K562 (cell line): ENCODE measurements at regions of chr11 and their contacts with region 1.

Region 1: DNA sequence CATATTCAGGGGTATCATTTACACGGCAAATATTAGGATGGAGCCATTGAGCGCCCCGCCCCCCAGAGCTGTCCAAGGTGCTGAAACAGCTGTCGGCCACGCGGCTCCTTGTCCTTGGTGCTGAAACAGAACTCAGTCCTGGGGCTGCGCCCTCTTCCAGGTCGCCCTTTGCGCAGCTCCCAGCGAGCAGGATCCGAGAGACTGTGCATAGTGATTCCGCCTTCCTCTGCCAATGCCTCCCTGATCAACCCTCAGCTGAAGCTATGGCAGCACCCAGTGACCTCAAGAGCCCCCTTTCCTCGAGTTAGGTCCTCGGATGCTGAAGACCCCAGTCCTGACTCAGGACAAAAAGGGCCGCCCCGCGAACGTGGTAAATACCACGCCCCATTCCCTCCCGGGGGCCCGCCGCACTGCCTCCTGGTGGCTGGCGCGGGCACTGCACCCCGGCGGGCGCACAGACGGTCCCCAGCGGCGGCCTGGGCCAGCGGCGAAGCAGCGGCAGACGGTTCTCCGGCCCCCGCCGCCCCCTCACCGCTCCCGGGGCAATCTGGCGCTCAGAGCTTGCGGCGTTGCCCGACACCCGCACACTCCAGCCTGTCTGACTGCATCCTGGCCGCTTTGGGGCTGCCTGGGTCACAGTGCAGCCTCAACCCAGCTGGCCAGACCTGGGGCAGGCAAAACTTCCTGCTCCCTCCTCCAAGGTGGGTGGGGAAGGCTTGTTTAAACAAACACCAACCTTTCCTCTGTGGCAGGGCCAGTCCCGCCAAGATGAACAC is 13.4 kb downstream of the SYT7 start:
- DNase-seq: peak; percentile 90 to 95 (median 94)
- ATAC-seq: peak; percentile 98
- H3K4me3 ChIP-seq: no peak overlapping the region
- H3K27ac ChIP-seq: no peak overlapping the region
- H3K4me1 ChIP-seq: peaks cover 0 to 10% of the 10 kb centered on the region in 2 experiments; a peak in 2 of 5 replicates
- H3K27me3 ChIP-seq: peaks cover 0 to 20% of the 10 kb centered on the region in 2 experiments; a peak in 2 of 5 replicates
- CTCF ChIP-seq: peak; percentile 74 to 97 (median 86)
- EP300 ChIP-seq: no peak
- POLR2A ChIP-seq: no peak
- RAD21 ChIP-seq: peak; percentile 34 to 44; a peak in 3 of 4 replicates

Region 2: GRCh38 chr11:61347916-61348461 is 219.5 kb before region 1 on chr11:
- CTCF ChIA-PET with region 1: no interaction called
- POLR2A ChIA-PET with region 1: no interaction called
- in situ Hi-C with region 1: no loop called
- intact Hi-C with region 1: no loop called
- DNase-seq: no peak
- ATAC-seq: peak; percentile 48
- H3K4me3 ChIP-seq: no peak overlapping the region
- H3K27ac ChIP-seq: no peak overlapping the region; the same call in 2 of the 3 replicates
- H3K4me1 ChIP-seq: peaks cover 29 to 46% of the 10 kb centered on the region in 2 experiments; a peak in 4 of 5 replicates
- H3K27me3 ChIP-seq: no peaks in the 10 kb centered on the region
- CTCF ChIP-seq: no peak
- EP300 ChIP-seq: no peak
- POLR2A ChIP-seq: no peak; the same call in 1 of the 2 replicates
- RAD21 ChIP-seq: no peak

Region 3: DNA sequence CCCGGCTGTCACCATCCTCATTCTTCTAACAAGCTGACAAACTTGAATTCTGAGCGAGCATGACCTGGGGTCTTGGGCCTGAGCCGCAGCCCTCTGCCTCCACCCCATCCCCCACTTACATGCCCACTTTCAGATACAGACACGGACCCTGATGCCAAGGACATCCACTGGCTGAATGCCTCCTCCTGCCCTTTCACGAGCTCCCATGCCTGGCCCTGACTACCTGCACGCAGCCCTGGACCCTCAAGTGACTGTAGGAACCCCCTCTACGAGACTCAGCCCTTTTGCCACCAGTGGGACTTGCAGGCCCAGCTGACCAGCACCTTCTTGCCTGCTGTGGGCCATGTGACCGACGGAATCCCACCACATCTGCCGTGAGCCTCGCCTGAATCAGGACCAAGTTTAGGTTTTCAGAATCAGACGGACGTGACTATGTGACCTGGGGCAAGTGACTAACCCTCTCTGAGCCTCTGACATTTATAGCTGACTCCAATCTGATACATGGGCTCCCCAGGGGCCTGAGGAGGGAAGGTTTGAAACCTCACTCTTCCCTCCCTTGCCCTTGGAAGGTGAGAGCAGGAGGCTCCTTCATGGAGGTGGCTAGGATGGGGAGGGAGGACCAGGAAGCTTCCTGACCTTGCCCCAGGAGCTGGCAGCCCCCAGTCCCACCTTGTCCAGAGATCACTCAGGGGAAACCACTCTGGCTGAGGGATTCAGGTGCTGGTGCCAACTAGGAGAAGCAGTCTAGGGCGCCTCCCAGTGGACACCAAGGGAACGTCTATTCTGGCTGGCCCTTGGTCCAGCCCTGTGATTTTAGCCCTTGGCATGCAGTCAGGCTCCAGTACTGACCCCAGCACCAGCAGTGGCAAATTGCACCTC is 60.3 kb after region 1 on chr11:
- CTCF ChIA-PET with region 1: no interaction called
- POLR2A ChIA-PET with region 1: no interaction called
- in situ Hi-C with region 1: no loop called
- intact Hi-C with region 1: loop called (anchors 5 kb)
- DNase-seq: peak; percentile 61 to 74 (median 67)
- ATAC-seq: peak; percentile 94
- H3K4me3 ChIP-seq: no peak overlapping the region
- H3K27ac ChIP-seq: no peak overlapping the region
- H3K4me1 ChIP-seq: no peaks in the 10 kb centered on the region
- H3K27me3 ChIP-seq: peaks cover 17 to 58% of the 10 kb centered on the region in 2 experiments; a peak in 4 of 5 replicates
- CTCF ChIP-seq: peak; percentile 81 to 88 (median 87)
- EP300 ChIP-seq: no peak
- POLR2A ChIP-seq: no peak
- RAD21 ChIP-seq: peak; percentile 49 to 77; a peak in 3 of 4 replicates